Endothelial cell of umbilical vein (primary cell): ENCODE measurements at regions of chr10 and their contacts with region 1.

Region 1: DNA sequence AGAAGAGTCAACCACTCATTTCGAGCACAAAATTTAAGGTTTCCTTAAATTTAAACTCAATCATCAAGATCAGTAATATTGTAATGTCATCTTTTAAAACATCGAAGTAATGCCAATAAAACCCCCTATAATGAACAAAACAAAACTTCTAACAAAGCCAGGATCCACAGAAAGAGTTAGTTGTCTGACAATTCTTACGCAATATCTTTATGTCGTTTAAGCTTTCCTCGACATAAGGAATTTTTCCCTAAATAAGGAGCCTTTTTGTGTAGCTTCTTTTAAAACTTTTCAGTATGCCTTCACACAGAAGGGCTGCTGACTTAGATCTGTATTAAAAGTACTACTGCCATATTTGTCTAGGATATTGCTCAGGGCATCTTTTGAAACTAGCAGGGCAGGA is 7.5 kb downstream of the EBLN1 start:
- DNase-seq: no peak
- H3K4me3 ChIP-seq: no peak overlapping the region
- H3K27ac ChIP-seq: no peak overlapping the region
- H3K4me1 ChIP-seq: no peaks in the 10 kb centered on the region
- H3K27me3 ChIP-seq: peaks cover 0 to 4% of the 10 kb centered on the region in 2 experiments
- CTCF ChIP-seq: no peak
- POLR2A ChIP-seq: no peak

Region 2: GRCh38 chr10:22193945-22194344 is 16.3 kb before region 1 on chr10:
- CTCF ChIA-PET with region 1: no interaction called
- POLR2A ChIA-PET with region 1: no interaction called
- dilution Hi-C with region 1: no loop called
- intact Hi-C with region 1: no loop called
- DNase-seq: no peak
- H3K4me3 ChIP-seq: no peak overlapping the region
- H3K27ac ChIP-seq: no peak overlapping the region
- H3K4me1 ChIP-seq: no peaks in the 10 kb centered on the region
- H3K27me3 ChIP-seq: peaks cover 0 to 4% of the 10 kb centered on the region in 2 experiments
- CTCF ChIP-seq: no peak
- POLR2A ChIP-seq: no peak

Region 3: GRCh38 chr10:22251751-22252223 is 41.5 kb after region 1 on chr10:
- CTCF ChIA-PET with region 1: no interaction called
- POLR2A ChIA-PET with region 1: no interaction called
- dilution Hi-C with region 1: no loop called
- intact Hi-C with region 1: no loop called
- DNase-seq: peak; percentile 67
- H3K4me3 ChIP-seq: peak overlapping the region; percentile 58 to 87 (median 58)
- H3K27ac ChIP-seq: peak overlapping the region; percentile 81
- H3K4me1 ChIP-seq: peaks cover 6% of the 10 kb centered on the region
- H3K27me3 ChIP-seq: peaks cover under 1 to 1% of the 10 kb centered on the region in 2 experiments
- CTCF ChIP-seq: no peak
- POLR2A ChIP-seq: no peak

Region 4: GRCh38 chr10:22854935-22855421 is 644.7 kb after region 1 on chr10:
- CTCF ChIA-PET with region 1: no interaction called
- POLR2A ChIA-PET with region 1: no interaction called
- dilution Hi-C with region 1: no loop called
- intact Hi-C with region 1: loop called (anchors 5 kb)
- DNase-seq: no peak
- H3K4me3 ChIP-seq: no peak overlapping the region
- H3K27ac ChIP-seq: no peak overlapping the region
- H3K4me1 ChIP-seq: no peaks in the 10 kb centered on the region
- H3K27me3 ChIP-seq: no peaks in the 10 kb centered on the region
- CTCF ChIP-seq: no peak
- POLR2A ChIP-seq: no peak